ENCODE measurements at regions of chr2 and their contacts with region 1.

Region 1: DNA sequence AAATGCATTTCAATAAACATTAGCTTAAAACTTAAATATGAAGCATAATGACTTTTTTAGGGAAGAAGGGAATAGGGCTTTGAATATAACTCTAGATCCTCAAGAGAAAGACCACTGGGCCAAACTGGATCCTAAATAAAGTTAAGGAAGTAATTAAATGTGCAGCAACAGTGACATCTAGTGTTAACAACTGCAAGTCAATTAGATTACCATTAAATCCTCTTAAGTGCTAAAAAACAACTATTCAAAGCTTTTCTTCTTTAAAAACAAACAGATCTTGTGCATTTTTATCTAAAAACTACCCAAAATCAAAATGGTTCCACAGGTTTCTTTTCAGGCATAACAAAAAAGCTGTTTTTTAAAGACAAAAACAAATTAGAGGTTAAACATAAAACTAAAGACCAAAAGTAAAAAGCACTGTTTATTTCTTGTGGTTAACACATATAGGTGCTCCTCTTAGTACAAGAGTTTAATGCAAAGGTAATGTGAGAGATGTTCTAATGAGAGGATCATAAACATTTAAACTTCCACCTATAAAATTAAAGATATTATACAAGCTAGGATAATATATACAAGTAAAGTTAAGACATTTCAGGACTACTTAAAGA is 111.4 kb downstream of the THADA start:
- DNase-seq: peak in 1 of 35 experiments; percentile 80
- ATAC-seq: no peak
- H3K4me3 ChIP-seq: no peak overlapping the region
- H3K4me3 Mint-ChIP-seq: no peak overlapping the region
- H3K27ac ChIP-seq: no peak overlapping the region
- H3K27ac Mint-ChIP-seq: peak overlapping the region in 1 of 2 donors; percentile 39
- H3K4me1 ChIP-seq: no peaks in the 10 kb centered on the region
- H3K4me1 Mint-ChIP-seq: peaks cover 0 to 18% (median 4%) of the 10 kb centered on the region in 3 donors
- H3K27me3 ChIP-seq: no peaks in the 10 kb centered on the region
- H3K27me3 Mint-ChIP-seq: no peaks in the 10 kb centered on the region

Region 2: GRCh38 chr2:42859006-42859552 is 625.3 kb before region 1 on chr2:
- CTCF ChIA-PET with region 1: interaction called, 4 to 15 read pairs
- POLR2A ChIA-PET with region 1: no interaction called
- DNase-seq: peak in 33 of 35 experiments; percentile 10 to 73 (median 40)
- ATAC-seq: no peak
- H3K4me3 ChIP-seq: no peak overlapping the region
- H3K4me3 Mint-ChIP-seq: no peak overlapping the region
- H3K27ac ChIP-seq: no peak overlapping the region
- H3K27ac Mint-ChIP-seq: no peak overlapping the region
- H3K4me1 ChIP-seq: no peaks in the 10 kb centered on the region
- H3K4me1 Mint-ChIP-seq: no peaks in the 10 kb centered on the region
- H3K27me3 ChIP-seq: peaks cover 0 to 3% of the 10 kb centered on the region in 2 experiments
- H3K27me3 Mint-ChIP-seq: no peaks in the 10 kb centered on the region

Region 3: GRCh38 chr2:42944779-42945415 is 539.5 kb before region 1 on chr2:
- CTCF ChIA-PET with region 1: interaction called, 47 to 51 read pairs
- POLR2A ChIA-PET with region 1: interaction called, 6 to 14 read pairs
- DNase-seq: no peak
- ATAC-seq: no peak
- H3K4me3 ChIP-seq: no peak overlapping the region
- H3K4me3 Mint-ChIP-seq: no peak overlapping the region
- H3K27ac ChIP-seq: no peak overlapping the region
- H3K27ac Mint-ChIP-seq: no peak overlapping the region
- H3K4me1 ChIP-seq: no peaks in the 10 kb centered on the region
- H3K4me1 Mint-ChIP-seq: peaks cover 0 to 5% (median 2%) of the 10 kb centered on the region in 3 donors
- H3K27me3 ChIP-seq: peaks cover 0 to 12% of the 10 kb centered on the region in 2 experiments
- H3K27me3 Mint-ChIP-seq: no peaks in the 10 kb centered on the region

Region 4: GRCh38 chr2:43131024-43131889 is 353.2 kb before region 1 on chr2:
- CTCF ChIA-PET with region 1: interaction called, 7 to 27 read pairs
- POLR2A ChIA-PET with region 1: no interaction called
- DNase-seq: peak; percentile 67 to 98 (median 86)
- ATAC-seq: peak; percentile 40 to 52 (median 47)
- H3K4me3 ChIP-seq: peak overlapping the region; percentile 27 to 49
- H3K4me3 Mint-ChIP-seq: peak overlapping the region; percentile 7 to 63 (median 52)
- H3K27ac ChIP-seq: peak overlapping the region; percentile 92
- H3K27ac Mint-ChIP-seq: peak overlapping the region; percentile 99 to 100
- H3K4me1 ChIP-seq: peaks cover 77 to 97% of the 10 kb centered on the region in 2 experiments
- H3K4me1 Mint-ChIP-seq: peaks cover 89 to 90% (median 89%) of the 10 kb centered on the region in 3 donors
- H3K27me3 ChIP-seq: no peaks in the 10 kb centered on the region
- H3K27me3 Mint-ChIP-seq: no peaks in the 10 kb centered on the region

Region 5: DNA sequence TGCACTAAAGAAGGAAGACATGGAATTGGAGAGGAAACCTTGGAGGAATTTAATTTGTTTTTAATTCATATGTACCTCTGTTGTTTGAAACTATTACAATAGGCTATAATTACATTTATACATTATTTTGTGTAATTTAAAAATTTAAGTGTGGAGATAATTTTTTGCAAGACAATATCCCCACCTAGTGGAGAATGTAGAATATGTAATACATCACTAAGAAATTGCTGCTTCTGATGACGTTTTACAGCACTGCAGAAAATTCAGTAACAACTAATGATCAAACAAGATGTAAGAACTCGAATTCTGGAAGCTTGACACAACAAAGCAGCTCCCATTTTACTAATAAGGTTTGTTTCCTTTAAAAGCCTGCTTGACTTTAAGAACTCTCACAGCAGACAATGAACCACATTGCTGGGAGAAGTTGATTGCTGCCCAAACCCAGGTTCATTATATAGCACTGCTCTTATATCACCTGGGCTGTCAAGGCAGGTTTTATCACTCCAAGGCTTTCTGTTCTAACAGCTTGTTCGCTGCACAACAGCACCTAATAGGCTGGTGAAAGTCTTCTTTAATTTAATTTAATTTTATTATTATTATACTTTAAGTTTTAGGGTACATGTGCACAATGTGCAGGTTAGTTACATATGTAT is 58.0 kb after region 1 on chr2:
- CTCF ChIA-PET with region 1: interaction called in 1 of 2 experiments, 10 read pairs
- POLR2A ChIA-PET with region 1: no interaction called
- DNase-seq: peak in 2 of 35 experiments; percentile 5 to 68
- ATAC-seq: peak; percentile 43 to 94 (median 50)
- H3K4me3 ChIP-seq: no peak overlapping the region
- H3K4me3 Mint-ChIP-seq: no peak overlapping the region
- H3K27ac ChIP-seq: no peak overlapping the region
- H3K27ac Mint-ChIP-seq: no peak overlapping the region
- H3K4me1 ChIP-seq: peaks cover 2 to 4% of the 10 kb centered on the region in 2 experiments
- H3K4me1 Mint-ChIP-seq: peaks cover 14 to 16% (median 14%) of the 10 kb centered on the region in 3 donors
- H3K27me3 ChIP-seq: no peaks in the 10 kb centered on the region
- H3K27me3 Mint-ChIP-seq: no peaks in the 10 kb centered on the region

Measured in T-cell (primary cell).